ENCODE measurements at regions of chr17 and their contacts with region 1.

Region 1: GRCh38 chr17:49707608-49708514 is at the start of gene SLC35B1:
- DNase-seq: peak; percentile 100
- H3K4me3 ChIP-seq: peak within 1 kb of the TSS; percentile 84 to 93 (median 84)
- H3K27ac ChIP-seq: peak within 1 kb of the TSS; percentile 97
- H3K4me1 ChIP-seq: peaks cover 33% of the 10 kb centered on the region
- H3K27me3 ChIP-seq: no peaks in the 10 kb centered on the region
- CTCF ChIP-seq: peak; percentile 86 to 91
- POLR2A ChIP-seq: peak; percentile 66
- total RNA-seq, gene SLC35B1: 87.0 and 96.7 TPM in 2 replicates

Region 2: DNA sequence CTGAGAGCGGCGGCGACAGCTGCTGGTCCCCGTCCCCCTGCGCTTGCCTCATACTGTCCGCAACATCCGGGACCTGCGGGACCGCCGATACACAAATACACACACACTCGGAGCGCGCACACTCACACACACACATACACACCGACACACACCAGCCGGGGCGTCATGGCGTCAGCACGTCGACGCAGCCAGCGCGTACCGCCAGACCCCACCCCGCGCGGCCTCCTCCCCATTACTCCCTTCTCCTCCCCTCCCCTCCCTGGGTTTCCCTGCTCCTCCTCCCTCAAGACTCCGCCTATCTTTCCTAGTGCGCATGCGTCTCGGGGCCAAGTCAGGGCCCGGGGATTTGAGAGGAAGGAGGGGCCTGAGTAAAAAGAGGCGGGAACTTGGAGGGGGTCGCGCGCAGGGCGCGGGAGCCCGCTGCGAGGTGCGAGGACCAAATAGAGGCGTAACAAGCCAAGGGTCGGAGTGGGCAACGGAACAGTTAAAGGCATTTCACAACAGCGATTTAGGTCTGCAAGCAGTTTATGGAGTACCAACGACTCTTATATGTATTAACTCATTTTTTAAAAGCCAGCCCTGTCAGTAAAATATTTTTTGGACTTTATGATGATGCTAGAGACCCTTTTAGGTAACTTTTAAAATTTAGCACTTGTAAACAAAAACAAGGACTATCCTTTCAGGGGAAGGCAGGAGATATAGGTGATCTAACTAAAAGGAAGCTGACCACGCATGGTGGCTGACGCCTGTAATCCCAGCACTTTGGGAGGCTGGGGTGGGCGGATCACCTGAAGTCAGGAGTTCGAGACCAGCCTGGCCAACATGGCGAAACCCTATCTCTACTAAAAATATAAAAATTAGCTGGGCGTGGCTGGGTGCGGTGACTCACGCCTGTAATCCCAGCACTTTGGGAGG is 29.7 kb before region 1 on chr17 and contains the start of gene SPOP:
- CTCF ChIA-PET with region 1: interaction called, 5 read pairs
- POLR2A ChIA-PET with region 1: no interaction called
- dilution Hi-C with region 1: no loop called
- intact Hi-C with region 1: loop called (anchors 1 kb)
- DNase-seq: peak; percentile 99
- H3K4me3 ChIP-seq: peak within 1 kb of the TSS; percentile 38 to 86 (median 75)
- H3K27ac ChIP-seq: peak within 1 kb of the TSS; percentile 45
- H3K4me1 ChIP-seq: peaks cover 10% of the 10 kb centered on the region
- H3K27me3 ChIP-seq: no peaks in the 10 kb centered on the region
- CTCF ChIP-seq: no peak
- POLR2A ChIP-seq: peak; percentile 73
- total RNA-seq, gene SPOP: 61.0 and 61.9 TPM in 2 replicates

Region 3: DNA sequence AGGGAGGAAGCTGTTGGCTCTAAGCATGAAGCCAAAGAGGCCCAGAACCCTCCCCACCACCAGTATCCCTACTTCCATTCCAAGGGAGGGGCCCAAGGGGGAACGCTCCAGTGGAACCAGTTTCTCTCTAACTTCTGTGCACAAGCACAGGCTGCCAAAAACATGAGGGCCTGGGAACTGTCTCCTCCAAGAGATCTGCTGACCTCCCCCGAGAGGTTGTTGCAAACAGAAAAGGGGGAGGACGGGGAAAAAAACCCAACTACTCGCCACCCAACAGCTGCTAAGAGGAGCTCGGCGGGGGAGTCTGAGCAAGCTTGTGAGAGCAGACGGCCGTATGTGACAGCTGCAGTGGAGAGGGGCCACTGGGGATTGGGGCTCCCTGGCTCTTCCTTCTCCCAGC is 15.6 kb after region 1 on chr17:
- CTCF ChIA-PET with region 1: interaction called, 10 read pairs
- POLR2A ChIA-PET with region 1: no interaction called
- dilution Hi-C with region 1: no loop called
- intact Hi-C with region 1: no loop called
- DNase-seq: no peak
- H3K4me3 ChIP-seq: no peak overlapping the region
- H3K27ac ChIP-seq: no peak overlapping the region
- H3K4me1 ChIP-seq: no peaks in the 10 kb centered on the region
- H3K27me3 ChIP-seq: no peaks in the 10 kb centered on the region
- CTCF ChIP-seq: no peak
- POLR2A ChIP-seq: no peak

Region 4: DNA sequence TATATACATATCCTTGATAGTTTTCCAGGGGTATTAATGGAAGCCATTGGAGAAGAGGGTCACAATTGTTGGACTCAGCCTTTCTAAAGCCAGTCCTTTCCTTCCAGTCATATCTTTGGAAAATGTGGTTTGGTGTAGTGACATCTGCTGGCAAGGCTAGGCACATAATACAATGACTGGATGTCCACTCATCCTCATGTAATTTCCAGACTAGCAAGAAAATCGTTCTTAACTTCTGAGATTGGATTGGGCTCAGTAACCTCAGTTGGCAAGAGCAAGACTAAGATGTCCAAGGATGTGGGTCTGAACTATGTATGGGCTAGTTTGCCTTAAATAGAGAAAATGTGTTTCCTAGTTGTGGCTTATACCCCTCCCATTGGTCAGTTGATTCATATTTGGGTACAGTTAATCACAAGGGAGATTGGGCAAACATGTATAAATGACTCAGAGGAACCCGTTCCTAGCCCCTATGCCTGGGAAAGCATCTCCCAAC is 71.9 kb after region 1 on chr17:
- CTCF ChIA-PET with region 1: interaction called, 27 read pairs
- POLR2A ChIA-PET with region 1: interaction called, 8 read pairs
- dilution Hi-C with region 1: no loop called
- intact Hi-C with region 1: loop called (anchors 1 kb)
- DNase-seq: peak; percentile 79
- H3K4me3 ChIP-seq: no peak overlapping the region
- H3K27ac ChIP-seq: no peak overlapping the region
- H3K4me1 ChIP-seq: peaks cover 26% of the 10 kb centered on the region
- H3K27me3 ChIP-seq: no peaks in the 10 kb centered on the region
- CTCF ChIP-seq: peak; percentile 48 to 67
- POLR2A ChIP-seq: no peak

Region 5: DNA sequence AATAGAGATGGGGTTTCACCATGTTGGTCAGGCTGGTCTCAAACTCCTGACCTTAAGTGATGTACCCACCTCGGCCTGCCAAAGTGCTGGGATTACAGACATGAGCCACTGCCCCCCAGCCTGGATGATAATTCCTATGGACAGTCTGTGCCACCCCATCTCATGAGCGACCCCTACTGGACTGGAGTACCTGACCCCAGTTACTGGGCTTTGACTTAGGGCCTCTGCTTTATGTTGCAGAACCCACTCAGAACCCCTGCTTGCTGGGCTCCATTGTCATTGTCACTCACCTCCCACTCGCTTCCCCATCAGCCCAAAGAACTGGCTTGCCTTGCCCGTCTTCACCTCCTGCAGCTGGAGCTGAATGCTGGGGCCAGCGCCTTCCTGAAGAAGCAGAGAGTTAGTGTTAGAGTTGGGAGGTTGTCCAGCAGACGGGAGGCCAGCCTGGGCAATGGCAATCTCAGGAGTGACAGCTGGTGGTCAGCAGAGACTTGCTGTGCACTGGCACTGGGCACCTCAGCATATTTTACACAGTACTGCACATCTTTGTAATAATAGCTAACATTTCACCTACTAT is 136.0 kb after region 1 on chr17:
- CTCF ChIA-PET with region 1: interaction called, 11 read pairs
- POLR2A ChIA-PET with region 1: no interaction called
- dilution Hi-C with region 1: no loop called
- intact Hi-C with region 1: loop called (anchors 2 kb)
- DNase-seq: peak; percentile 39
- H3K4me3 ChIP-seq: no peak overlapping the region
- H3K27ac ChIP-seq: no peak overlapping the region
- H3K4me1 ChIP-seq: peaks cover 8% of the 10 kb centered on the region
- H3K27me3 ChIP-seq: no peaks in the 10 kb centered on the region
- CTCF ChIP-seq: peak; percentile 66 to 69
- POLR2A ChIP-seq: no peak